ENCODE measurements at regions of chr19 and their contacts with region 1.

Region 1: GRCh38 chr19:49200238-49200862 is 42.8 kb downstream of the TRPM4 start:
- DNase-seq: no peak
- ATAC-seq: no peak
- H3K4me3 ChIP-seq: no peak overlapping the region
- H3K27ac ChIP-seq: no peak overlapping the region
- H3K4me1 ChIP-seq: peaks cover 0 to 8% of the 10 kb centered on the region in 2 donors
- H3K27me3 ChIP-seq: no peaks in the 10 kb centered on the region
- CTCF ChIP-seq: no peak
- POLR2A ChIP-seq: no peak

Region 2: GRCh38 chr19:49042177-49042576 is 158.2 kb before region 1 on chr19:
- in situ Hi-C with region 1: no loop called
- intact Hi-C with region 1: no loop called
- DNase-seq: no peak
- ATAC-seq: no peak
- H3K4me3 ChIP-seq: no peak overlapping the region
- H3K27ac ChIP-seq: no peak overlapping the region
- H3K4me1 ChIP-seq: no peaks in the 10 kb centered on the region
- H3K27me3 ChIP-seq: no peaks in the 10 kb centered on the region
- CTCF ChIP-seq: no peak
- POLR2A ChIP-seq: no peak

Region 3: DNA sequence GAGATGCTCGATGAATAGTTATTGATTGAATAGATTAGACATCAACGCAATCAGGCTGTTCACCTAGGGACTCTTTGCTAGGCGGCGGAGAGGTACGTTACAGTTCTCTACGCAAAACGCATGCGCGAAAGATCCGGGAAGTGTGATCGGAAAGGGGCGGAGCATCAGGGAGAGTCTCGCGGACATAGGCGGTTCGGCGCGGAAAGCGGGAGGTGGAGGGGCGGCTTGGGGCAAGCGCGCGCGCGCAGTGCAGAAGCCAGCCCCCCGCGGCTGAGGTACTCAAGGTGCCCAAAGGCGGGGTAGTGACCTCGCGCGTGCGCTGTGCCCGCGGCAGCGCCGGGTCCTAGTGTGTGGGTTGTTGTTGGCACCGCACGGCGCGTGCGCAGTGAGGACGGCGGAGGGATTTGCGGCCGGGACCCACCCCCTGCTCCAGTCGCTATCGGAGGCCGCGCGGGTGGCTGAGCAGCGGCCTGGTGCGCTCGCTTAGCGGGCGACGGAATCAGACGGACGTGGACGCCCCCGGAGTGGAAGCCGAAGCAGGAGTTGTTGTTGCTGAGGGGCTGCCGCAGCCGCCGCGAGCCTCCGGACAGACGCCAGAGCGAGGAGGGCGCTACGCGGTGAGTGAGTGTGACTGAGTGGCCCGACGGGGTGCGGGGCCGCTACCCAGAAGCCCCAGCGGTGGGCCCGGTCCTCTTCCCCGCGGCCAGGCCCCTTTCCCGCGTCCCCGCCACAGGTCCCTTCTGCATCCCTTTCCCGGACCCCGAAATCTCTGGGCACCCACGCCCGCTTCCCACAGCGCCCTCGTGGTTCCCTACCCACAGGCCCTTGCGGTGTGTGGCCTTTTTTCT is 115.1 kb before region 1 on chr19 and contains the start of gene SNRNP70:
- in situ Hi-C with region 1: loop called in 2 of 4 experiments (anchors 10 kb)
- intact Hi-C with region 1: no loop called
- DNase-seq: peak; percentile 99
- ATAC-seq: peak; percentile 90 to 94
- H3K4me3 ChIP-seq: peak within 1 kb of the TSS; percentile 88 to 99 (median 92)
- H3K27ac ChIP-seq: peak within 1 kb of the TSS; percentile 90 to 98 (median 92)
- H3K4me1 ChIP-seq: peaks cover 18 to 26% of the 10 kb centered on the region in 2 donors
- H3K27me3 ChIP-seq: no peaks in the 10 kb centered on the region
- CTCF ChIP-seq: peak in 2 of 5 experiments; percentile 18 to 53
- POLR2A ChIP-seq: peak; percentile 86 to 92
- total RNA-seq, gene SNRNP70: 55.6 to 305 (median 107) TPM

Region 4: DNA sequence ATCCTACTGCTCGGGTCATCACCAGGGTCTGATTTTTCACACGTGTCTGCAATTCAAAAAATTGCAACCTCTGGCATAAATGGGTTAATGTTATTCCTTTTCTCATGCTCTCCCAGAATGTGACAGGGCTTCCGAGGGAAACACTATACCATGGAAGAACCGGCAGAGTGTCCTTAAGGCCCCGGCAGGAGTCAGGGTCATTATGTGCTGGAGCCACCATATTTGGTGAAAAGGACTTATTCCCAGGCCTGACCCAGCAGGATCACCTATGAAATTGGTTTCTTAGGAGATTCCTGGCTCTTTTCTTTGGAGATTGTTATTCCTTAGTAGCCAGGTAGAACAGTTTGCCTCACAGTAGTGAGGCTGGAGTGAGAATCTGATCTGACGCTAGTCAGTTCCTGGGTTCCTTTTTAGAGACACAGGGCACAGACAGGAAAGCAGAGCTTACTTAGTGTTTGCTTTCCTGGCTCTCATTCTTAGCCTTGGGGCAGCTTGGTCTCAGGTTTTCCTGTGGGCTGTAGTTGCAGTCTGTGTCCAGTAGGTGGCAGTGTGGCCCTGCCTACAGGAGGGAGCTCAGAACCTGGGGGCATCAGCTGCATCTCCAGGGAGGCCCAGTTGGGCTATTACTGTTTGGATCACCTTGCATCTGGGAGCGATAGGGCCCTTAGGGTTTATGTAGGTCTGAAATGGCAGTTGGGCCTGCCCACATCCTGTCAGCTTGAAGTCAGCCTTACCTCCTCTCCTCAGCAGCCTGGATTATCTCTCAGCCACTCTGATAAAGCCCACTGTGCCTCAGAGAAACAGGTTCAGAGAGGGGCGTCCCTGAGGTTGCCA is 102.7 kb before region 1 on chr19:
- in situ Hi-C with region 1: loop called in 3 of 4 experiments (anchors 5 to 10 kb)
- intact Hi-C with region 1: loop called (anchors 1 kb)
- DNase-seq: peak; percentile 50 to 80
- ATAC-seq: peak; percentile 62 to 77
- H3K4me3 ChIP-seq: no peak overlapping the region
- H3K27ac ChIP-seq: peak overlapping the region; percentile 75 to 85 (median 78)
- H3K4me1 ChIP-seq: peaks cover 46 to 50% of the 10 kb centered on the region in 2 donors
- H3K27me3 ChIP-seq: no peaks in the 10 kb centered on the region
- CTCF ChIP-seq: peak; percentile 97 to 99 (median 99)
- POLR2A ChIP-seq: no peak

Region 5: DNA sequence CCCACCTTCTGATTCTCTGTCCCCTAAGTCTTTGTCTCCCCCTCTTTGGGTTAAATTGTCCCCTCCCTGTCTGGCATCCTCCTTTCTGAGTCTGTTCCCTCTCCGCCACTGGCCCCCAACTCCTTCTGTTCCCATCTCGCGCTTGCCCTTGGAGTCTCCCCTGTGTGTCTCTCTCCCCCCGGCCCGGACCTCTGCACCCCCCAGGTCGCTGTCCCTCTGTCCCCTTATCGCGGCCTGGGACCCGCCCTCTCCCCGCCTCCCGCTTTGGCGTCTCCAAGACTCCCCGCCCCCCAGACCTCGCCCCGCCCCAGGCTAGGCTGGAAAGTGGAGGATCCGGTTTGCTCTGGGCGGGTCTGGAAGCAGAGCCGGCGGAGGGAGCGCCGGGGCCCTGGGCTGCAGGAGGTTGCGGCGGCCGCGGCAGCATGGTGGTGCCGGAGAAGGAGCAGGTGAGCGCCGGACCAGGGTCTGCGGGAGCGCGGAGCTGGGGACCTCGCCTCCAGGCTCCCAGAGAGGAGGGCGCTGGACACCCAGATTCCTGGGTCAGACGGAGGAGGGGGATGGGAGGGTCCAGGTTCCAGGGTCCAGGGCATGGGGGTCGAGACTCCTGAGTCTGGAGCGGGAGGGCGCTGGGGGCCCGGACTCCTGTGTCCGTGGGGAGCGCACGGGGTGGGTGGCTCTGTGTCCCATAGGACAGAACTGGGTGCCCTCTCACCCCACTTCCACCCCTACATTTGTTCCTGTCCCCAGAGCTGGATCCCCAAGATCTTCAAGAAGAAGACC is 42.7 kb before region 1 on chr19 and contains the start of gene TRPM4:
- in situ Hi-C with region 1: loop called in 1 of 4 experiments (anchors 5 kb)
- intact Hi-C with region 1: loop called (anchors 5 kb)
- DNase-seq: peak; percentile 91 to 94
- ATAC-seq: peak; percentile 44 to 50
- H3K4me3 ChIP-seq: peak within 1 kb of the TSS; percentile 80 to 93 (median 85)
- H3K27ac ChIP-seq: peak within 1 kb of the TSS; percentile 99 to 100 (median 99)
- H3K4me1 ChIP-seq: peaks cover 20 to 40% of the 10 kb centered on the region in 2 donors
- H3K27me3 ChIP-seq: no peaks in the 10 kb centered on the region
- CTCF ChIP-seq: no peak
- POLR2A ChIP-seq: peak; percentile 87 to 90
- total RNA-seq, gene TRPM4: 10.4 to 11.5 (median 11.3) TPM

Region 6: GRCh38 chr19:49167857-49168409 is 32.4 kb before region 1 on chr19:
- in situ Hi-C with region 1: no loop called
- intact Hi-C with region 1: no loop called
- DNase-seq: no peak
- ATAC-seq: no peak
- H3K4me3 ChIP-seq: no peak overlapping the region
- H3K27ac ChIP-seq: no peak overlapping the region
- H3K4me1 ChIP-seq: peaks cover 16 to 20% of the 10 kb centered on the region in 2 donors
- H3K27me3 ChIP-seq: no peaks in the 10 kb centered on the region
- CTCF ChIP-seq: no peak
- POLR2A ChIP-seq: no peak

Region 7: DNA sequence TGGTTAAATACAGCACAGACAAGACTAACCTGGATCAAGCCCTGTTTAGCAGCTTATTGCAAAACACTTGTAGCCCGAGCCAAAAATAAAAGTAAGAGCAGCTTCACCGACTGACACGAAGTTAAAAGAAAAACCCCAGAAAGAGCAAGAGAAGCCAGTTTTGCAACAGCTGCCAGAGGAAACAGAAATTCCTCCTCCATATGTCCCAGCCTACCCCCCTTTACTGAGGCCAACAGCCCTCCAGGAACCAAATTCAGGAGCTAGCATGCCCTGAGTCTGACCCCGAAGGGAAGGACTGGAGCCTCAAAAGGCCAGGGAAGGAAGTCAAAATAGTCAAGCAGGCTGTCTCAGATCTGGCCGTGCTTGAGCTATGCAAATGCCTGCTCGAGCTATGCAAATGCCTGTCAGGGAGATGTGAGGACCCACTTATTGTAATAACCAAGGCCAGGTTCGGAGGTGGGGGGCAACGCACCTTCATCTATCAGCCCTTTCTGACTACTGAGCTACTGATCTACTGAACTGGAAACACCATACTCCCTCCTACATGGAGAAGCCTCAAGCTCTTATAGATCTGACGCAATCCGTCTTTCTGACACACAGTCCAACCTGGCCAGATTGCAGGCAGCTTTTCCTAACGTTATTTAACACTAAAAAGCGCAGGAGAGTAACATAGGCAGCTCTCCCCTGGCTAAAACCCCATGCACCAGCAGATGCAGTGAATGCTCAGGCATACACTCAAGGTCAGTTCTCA is 753.9 kb after region 1 on chr19:
- in situ Hi-C with region 1: no loop called
- intact Hi-C with region 1: no loop called
- DNase-seq: no peak
- ATAC-seq: no peak
- H3K4me3 ChIP-seq: no peak overlapping the region
- H3K27ac ChIP-seq: no peak overlapping the region
- H3K4me1 ChIP-seq: no peaks in the 10 kb centered on the region
- H3K27me3 ChIP-seq: peaks cover 0 to 7% (median 0%) of the 10 kb centered on the region in 3 donors
- CTCF ChIP-seq: no peak
- POLR2A ChIP-seq: no peak

Measured in gastrocnemius medialis (tissue), 4 donors.